Activated CD8-positive, alpha-beta T cell treated with anti-CD3 and anti-CD28 coated beads, Interleukin-2, amount 10 ng/mL, durations not matched to agents 7 days and 5 days (primary cell): ENCODE measurements at regions of chr1 and their contacts with region 1.

Region 1: DNA sequence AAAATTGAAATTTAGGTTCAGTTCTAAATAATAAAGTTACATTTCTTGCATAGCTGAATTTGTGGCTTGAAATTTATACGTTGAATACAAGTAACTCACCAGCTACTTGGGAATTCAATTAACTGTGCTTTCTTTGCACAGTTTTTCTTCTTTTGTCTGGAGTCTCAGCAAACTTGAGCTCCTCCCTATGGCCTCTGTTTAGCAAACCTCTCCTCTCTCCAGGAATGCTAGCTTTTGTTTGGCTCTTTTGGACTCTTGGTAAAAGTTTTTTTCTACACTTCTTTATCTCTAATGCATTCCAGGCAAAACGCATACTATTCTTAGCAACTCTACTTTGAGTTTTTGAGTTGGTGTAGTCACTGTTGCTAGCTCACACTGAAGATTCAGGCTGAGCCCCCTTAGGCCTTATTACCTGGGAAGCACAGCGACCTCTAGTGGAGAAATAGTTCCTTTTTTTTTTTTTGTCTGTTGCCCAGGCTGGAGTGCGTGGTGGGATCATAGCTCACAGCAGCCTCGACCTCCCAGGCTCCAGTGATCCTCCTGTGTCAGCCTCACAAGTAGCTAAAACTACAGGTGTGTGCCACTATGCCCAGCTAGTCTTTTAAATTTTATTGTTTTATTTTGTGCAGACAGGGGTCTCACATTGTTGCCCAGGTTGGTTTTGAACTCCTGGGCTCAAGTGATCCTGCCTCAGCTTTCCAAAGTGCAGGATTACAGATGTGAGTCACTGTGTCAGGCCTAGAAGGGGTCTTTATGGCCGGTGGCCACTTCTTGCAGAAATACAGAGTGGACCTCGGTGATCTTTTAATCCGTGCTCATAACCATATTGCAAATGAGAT is 61.7 kb downstream of the CASQ2 start:
- DNase-seq: peak; percentile 23
- ATAC-seq: no peak
- H3K4me3 Mint-ChIP-seq: no peak overlapping the region
- H3K27ac Mint-ChIP-seq: no peak overlapping the region
- H3K4me1 Mint-ChIP-seq: no peaks in the 10 kb centered on the region
- H3K27me3 Mint-ChIP-seq: peaks cover 11% of the 10 kb centered on the region

Region 2: DNA sequence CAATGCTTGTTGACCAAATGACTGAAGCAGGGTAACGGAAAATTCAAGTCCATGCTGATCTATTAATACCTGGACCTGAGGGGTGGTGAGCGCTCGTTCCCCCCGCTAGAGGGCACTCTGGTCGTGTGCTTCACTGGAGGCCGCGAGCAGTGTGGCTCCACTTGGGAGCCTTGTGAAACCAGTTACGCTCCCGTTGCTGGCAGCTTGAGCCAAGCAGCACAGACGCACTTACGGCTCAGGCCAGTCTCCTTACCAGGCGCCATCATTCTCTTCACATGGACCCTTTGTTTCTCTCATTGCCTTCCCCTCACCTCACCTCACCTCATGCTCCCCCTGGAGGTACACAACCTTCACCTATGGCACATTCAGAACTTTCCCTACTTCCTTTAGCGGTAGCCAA is 567.8 kb before region 1 on chr1:
- CTCF ChIA-PET with region 1: interaction called, 13 read pairs
- POLR2A ChIA-PET with region 1: no interaction called
- DNase-seq: peak; percentile 73
- ATAC-seq: peak; percentile 98
- H3K4me3 Mint-ChIP-seq: no peak overlapping the region
- H3K27ac Mint-ChIP-seq: no peak overlapping the region
- H3K4me1 Mint-ChIP-seq: peaks cover 3% of the 10 kb centered on the region
- H3K27me3 Mint-ChIP-seq: peaks cover 4% of the 10 kb centered on the region

Region 3: GRCh38 chr1:115515270-115515669 is 191.5 kb before region 1 on chr1:
- CTCF ChIA-PET with region 1: no interaction called
- POLR2A ChIA-PET with region 1: no interaction called
- DNase-seq: no peak
- ATAC-seq: no peak
- H3K4me3 Mint-ChIP-seq: no peak overlapping the region
- H3K27ac Mint-ChIP-seq: no peak overlapping the region
- H3K4me1 Mint-ChIP-seq: no peaks in the 10 kb centered on the region
- H3K27me3 Mint-ChIP-seq: peaks cover 6% of the 10 kb centered on the region

Region 4: DNA sequence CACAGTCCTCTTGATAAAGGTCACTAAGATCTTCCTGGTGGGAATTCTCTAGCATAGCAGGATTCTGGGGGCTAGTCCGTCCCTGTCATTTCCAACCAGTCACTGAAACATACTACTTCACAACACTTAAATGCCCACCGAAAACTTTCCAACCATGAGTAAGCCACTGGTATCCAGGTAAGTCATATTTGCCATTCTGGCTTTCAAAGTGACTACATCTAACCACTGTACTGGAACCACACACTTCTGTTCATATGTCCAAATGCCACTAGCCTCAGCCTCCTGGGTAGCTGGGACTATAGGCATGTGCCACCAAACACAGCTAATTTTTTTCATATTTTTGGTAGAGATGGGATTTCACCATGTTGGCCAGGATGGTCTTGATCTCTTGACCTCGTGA is 129.3 kb before region 1 on chr1:
- CTCF ChIA-PET with region 1: no interaction called
- POLR2A ChIA-PET with region 1: no interaction called
- DNase-seq: no peak
- ATAC-seq: no peak
- H3K4me3 Mint-ChIP-seq: no peak overlapping the region
- H3K27ac Mint-ChIP-seq: no peak overlapping the region
- H3K4me1 Mint-ChIP-seq: no peaks in the 10 kb centered on the region
- H3K27me3 Mint-ChIP-seq: no peaks in the 10 kb centered on the region

Region 5: GRCh38 chr1:115642168-115643072 is 64.4 kb before region 1 on chr1:
- CTCF ChIA-PET with region 1: interaction called, 18 read pairs
- POLR2A ChIA-PET with region 1: no interaction called
- DNase-seq: peak; percentile 67
- ATAC-seq: peak; percentile 66
- H3K4me3 Mint-ChIP-seq: peak overlapping the region; percentile 88
- H3K27ac Mint-ChIP-seq: peak overlapping the region; percentile 81
- H3K4me1 Mint-ChIP-seq: peaks cover 17% of the 10 kb centered on the region
- H3K27me3 Mint-ChIP-seq: peaks cover 13% of the 10 kb centered on the region

Region 6: GRCh38 chr1:115676500-115677181 is 30.2 kb before region 1 on chr1:
- CTCF ChIA-PET with region 1: interaction called, 13 read pairs
- POLR2A ChIA-PET with region 1: no interaction called
- DNase-seq: no peak
- ATAC-seq: no peak
- H3K4me3 Mint-ChIP-seq: no peak overlapping the region
- H3K27ac Mint-ChIP-seq: no peak overlapping the region
- H3K4me1 Mint-ChIP-seq: no peaks in the 10 kb centered on the region
- H3K27me3 Mint-ChIP-seq: no peaks in the 10 kb centered on the region

Region 7: DNA sequence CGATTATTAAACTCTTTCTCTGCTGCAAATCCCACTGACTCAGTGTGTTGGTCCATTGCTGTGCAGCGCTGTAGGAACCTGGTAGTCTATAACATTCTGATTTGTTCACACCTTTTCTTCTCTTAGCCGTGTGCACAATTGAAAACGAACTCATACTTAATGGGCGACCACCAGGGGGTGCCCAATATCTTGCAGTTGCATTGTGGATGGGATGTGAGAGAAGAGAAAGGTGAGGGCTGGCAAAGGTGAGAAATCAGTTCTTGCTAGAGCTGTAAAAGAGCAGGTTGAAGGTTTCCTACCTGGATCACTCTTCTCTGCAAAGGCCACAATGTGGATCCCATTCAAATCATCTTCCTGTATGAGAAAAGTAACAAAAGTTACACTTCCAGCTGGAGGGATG is 10.7 kb after region 1 on chr1:
- CTCF ChIA-PET with region 1: interaction called, 22 read pairs
- POLR2A ChIA-PET with region 1: no interaction called
- DNase-seq: peak; percentile 44
- ATAC-seq: no peak
- H3K4me3 Mint-ChIP-seq: no peak overlapping the region
- H3K27ac Mint-ChIP-seq: no peak overlapping the region
- H3K4me1 Mint-ChIP-seq: no peaks in the 10 kb centered on the region
- H3K27me3 Mint-ChIP-seq: peaks cover 2% of the 10 kb centered on the region

Region 8: DNA sequence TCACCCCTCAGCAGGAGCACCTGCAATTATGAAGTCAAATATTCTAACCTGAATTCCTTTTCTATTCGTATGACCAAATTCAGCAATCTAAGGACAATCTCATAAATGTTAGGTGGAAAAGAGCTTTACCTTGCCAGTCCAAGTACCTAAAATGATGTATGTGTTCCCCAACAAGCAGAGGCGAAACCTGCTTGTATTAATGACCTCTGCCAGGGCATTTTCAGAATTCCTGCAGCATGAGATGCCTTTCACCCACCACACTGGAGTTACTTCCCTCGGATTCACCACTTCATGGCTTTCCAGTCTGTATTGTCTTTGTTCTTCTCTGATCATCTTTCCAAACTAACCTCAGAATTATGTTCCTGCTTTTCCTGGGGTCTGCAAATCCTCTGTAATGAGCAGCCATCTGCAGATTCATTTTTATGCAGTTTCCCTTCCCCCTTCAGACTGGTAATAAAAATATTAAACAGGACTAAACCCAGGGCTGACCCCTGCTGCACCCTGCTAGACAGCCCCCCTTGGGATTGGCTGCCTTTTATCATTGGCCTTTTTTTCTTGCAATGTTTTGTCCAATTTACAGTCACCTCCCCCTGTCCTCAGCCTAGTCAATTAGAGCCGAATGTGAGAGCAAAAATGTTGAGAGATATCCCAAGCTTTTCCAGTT is 88.3 kb after region 1 on chr1:
- CTCF ChIA-PET with region 1: no interaction called
- POLR2A ChIA-PET with region 1: no interaction called
- DNase-seq: no peak
- ATAC-seq: no peak
- H3K4me3 Mint-ChIP-seq: no peak overlapping the region
- H3K27ac Mint-ChIP-seq: no peak overlapping the region
- H3K4me1 Mint-ChIP-seq: no peaks in the 10 kb centered on the region
- H3K27me3 Mint-ChIP-seq: peaks cover 19% of the 10 kb centered on the region